ENCODE measurements at regions of chr5 and their contacts with region 1.

Region 1: GRCh38 chr5:73314395-73315257 is 134.0 kb downstream of the FOXD1 start:
- DNase-seq: peak; percentile 71
- ATAC-seq: peak; percentile 87
- H3K4me3 ChIP-seq: peak overlapping the region; percentile 4; the same call in 1 of the 2 replicates
- H3K27ac ChIP-seq: peak overlapping the region; percentile 86
- H3K4me1 ChIP-seq: peaks cover 30% of the 10 kb centered on the region
- H3K27me3 ChIP-seq: no peaks in the 10 kb centered on the region
- CTCF ChIP-seq: no peak

Region 2: DNA sequence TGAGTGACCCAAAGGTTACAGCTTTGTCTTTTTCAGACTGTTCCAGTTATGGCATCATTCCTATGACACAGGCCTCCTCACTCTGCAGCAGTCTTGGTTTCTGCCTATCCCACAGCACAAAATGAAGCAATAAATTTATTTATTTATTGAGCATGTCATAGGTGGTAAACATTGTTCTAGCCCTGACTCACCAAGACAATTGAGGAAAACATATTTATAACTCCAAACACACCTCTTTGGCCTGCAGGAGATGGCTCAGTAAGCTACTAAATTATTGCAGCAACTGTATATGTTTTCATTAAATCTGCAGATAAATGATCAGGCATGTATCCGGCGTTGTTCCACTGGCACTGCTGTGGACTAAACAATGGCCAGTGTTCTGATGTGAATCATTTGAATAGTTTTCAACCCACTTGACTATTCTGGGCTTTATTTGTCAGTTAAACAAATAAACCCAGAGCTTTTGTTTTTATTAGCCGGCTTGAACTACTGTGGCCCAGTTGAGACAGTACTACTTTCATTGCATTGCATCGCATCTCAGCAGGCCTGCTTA is 50.8 kb after region 1 on chr5:
- CTCF ChIA-PET with region 1: no interaction called
- POLR2A ChIA-PET with region 1: no interaction called
- intact Hi-C with region 1: loop called (anchors 2 kb)
- DNase-seq: peak; percentile 88
- ATAC-seq: peak; percentile 86
- H3K4me3 ChIP-seq: no peak overlapping the region
- H3K27ac ChIP-seq: peak overlapping the region; percentile 96
- H3K4me1 ChIP-seq: peaks cover 41% of the 10 kb centered on the region
- H3K27me3 ChIP-seq: no peaks in the 10 kb centered on the region
- CTCF ChIP-seq: no peak

Region 3: DNA sequence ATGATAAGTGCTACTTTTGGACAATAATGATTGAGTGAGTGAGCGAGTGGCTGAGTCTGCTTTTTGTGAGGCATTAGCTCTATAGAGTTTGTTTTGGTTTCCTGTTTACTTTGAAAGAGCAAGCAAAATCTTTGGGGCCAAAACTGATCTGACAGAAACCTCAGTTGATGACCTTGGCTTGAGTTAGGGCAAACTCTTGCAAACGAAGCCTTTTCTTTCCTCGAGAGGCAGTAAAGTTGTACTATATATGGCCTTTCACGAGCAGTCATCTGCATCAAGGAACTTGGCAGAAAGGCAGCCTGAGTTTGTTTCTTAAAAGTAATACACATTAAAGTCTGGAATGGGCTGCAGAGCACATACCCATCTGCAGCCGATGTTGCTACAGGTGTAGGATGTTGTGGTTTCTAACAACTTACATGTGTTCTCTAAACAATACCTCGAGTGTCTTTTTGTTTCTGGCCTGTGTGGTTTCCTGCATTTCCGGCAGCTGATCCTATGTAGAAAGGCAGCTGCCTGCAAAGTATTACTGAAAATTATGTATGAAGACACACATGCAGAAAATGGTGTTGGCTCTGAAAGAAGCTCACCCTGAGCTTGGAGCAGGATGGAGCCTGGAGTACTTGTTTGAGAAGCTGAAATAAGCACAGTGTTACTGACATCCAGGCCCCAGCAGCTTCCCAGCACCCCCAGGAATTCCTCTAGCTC is 73.1 kb after region 1 on chr5:
- CTCF ChIA-PET with region 1: no interaction called
- POLR2A ChIA-PET with region 1: no interaction called
- intact Hi-C with region 1: loop called (anchors 2 kb)
- DNase-seq: no peak
- ATAC-seq: no peak
- H3K4me3 ChIP-seq: no peak overlapping the region
- H3K27ac ChIP-seq: no peak overlapping the region
- H3K4me1 ChIP-seq: no peaks in the 10 kb centered on the region
- H3K27me3 ChIP-seq: no peaks in the 10 kb centered on the region
- CTCF ChIP-seq: no peak

Region 4: GRCh38 chr5:74316064-74316679 is 1001.5 kb after region 1 on chr5:
- CTCF ChIA-PET with region 1: no interaction called
- POLR2A ChIA-PET with region 1: no interaction called
- intact Hi-C with region 1: no loop called
- DNase-seq: peak; percentile 82
- ATAC-seq: peak; percentile 89
- H3K4me3 ChIP-seq: no peak overlapping the region
- H3K27ac ChIP-seq: peak overlapping the region; percentile 92
- H3K4me1 ChIP-seq: peaks cover 27% of the 10 kb centered on the region
- H3K27me3 ChIP-seq: no peaks in the 10 kb centered on the region
- CTCF ChIP-seq: no peak